ENCODE measurements at regions of chr1 and their contacts with region 1.

Region 1: DNA sequence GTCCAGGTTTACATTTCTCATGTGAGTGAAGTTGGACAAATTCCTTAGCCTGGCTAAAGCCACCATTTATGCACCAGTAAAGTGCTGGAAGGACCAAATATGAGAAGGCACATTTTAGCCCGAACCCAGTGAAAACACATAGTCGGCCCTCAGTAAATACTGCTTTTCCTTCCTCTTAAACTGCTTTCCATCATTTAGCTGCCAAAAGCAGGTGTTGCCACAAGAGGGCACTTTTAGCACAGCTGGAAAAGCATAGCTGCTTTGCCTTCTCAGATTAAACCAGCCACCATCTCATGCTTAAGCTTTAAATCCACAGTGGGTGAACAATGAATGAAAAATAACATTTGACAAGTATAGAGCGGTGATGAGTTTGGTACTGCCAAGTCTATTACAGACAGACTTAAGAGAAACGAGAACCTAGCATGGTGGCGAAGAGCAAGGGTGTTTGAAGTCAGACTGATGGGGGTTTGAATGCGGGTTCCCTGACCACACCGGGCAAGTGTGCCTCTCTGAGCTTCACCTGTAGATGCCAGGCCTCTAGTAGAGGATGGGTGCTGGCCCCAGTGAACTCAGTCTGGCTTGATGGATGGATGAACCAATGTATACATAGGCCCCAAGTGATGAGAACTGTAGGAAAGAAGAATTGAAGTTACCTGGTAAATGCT is 57.8 kb downstream of the SLC35D1 start:
- DNase-seq: peak; percentile 59
- ATAC-seq: peak; percentile 89
- H3K4me3 ChIP-seq: no peak overlapping the region
- H3K27ac ChIP-seq: no peak overlapping the region
- H3K4me1 ChIP-seq: no peaks in the 10 kb centered on the region
- H3K27me3 ChIP-seq: no peaks in the 10 kb centered on the region
- CTCF ChIP-seq: peak; percentile 76 to 85 (median 81)
- EP300 ChIP-seq: no peak
- POLR2A ChIP-seq: no peak
- RAD21 ChIP-seq: peak; percentile 94

Region 2: DNA sequence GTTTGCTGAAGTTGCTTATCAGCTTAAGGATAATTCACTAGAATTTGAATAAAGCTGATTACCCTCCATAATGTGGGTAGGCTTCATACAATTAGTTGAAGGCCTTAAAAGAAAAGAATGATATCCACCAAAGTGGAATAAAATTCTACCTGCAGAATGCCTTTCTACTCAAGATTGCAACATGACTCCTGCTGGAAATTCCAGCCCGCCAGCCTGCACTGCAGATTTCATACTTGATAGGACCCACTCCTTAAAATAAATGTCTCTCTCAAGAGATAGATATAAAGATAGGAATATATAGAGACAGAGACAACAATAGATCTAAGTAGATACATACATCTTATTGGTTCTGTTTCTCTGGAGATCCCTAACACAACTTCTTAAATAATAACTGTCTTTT is 171.4 kb before region 1 on chr1:
- CTCF ChIA-PET with region 1: no interaction called
- POLR2A ChIA-PET with region 1: no interaction called
- RAD21 ChIA-PET with region 1: no interaction called
- SMC1A ChIA-PET with region 1: no interaction called
- in situ Hi-C with region 1: no loop called
- intact Hi-C with region 1: no loop called
- DNase-seq: no peak
- ATAC-seq: no peak
- H3K4me3 ChIP-seq: no peak overlapping the region
- H3K27ac ChIP-seq: no peak overlapping the region
- H3K4me1 ChIP-seq: no peaks in the 10 kb centered on the region
- H3K27me3 ChIP-seq: no peaks in the 10 kb centered on the region
- CTCF ChIP-seq: no peak
- EP300 ChIP-seq: no peak
- POLR2A ChIP-seq: no peak
- RAD21 ChIP-seq: no peak

Region 3: DNA sequence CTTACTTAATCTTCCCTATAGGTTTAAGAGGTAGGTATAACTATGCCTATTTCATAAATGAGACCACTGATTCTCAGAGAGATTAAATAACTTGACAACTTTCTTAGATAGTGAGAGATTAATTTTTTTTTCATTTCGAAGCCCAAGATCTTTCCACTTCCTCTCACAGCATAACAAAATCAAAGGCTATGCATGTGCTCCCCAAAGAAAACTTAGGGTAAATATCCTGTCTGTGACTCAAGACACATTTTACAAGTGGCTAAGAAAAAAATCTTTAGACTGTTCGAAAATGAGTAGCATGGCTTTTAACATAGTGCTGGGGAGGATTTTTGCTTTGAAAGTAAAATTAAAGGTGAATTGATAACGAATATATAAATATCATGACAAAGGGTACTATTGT is 146.8 kb after region 1 on chr1:
- CTCF ChIA-PET with region 1: interaction called, 93 read pairs
- POLR2A ChIA-PET with region 1: interaction called, 5 read pairs
- RAD21 ChIA-PET with region 1: interaction called, 64 read pairs
- SMC1A ChIA-PET with region 1: interaction called, 66 read pairs
- in situ Hi-C with region 1: loop called (anchors 5 kb)
- intact Hi-C with region 1: no loop called
- DNase-seq: no peak
- ATAC-seq: no peak
- H3K4me3 ChIP-seq: no peak overlapping the region
- H3K27ac ChIP-seq: no peak overlapping the region
- H3K4me1 ChIP-seq: 0 out of 2 replicates have a peak, but pooled peaks cover 2% of the 10 kb centered on the region
- H3K27me3 ChIP-seq: no peaks in the 10 kb centered on the region
- CTCF ChIP-seq: no peak
- EP300 ChIP-seq: no peak
- POLR2A ChIP-seq: no peak
- RAD21 ChIP-seq: no peak

Region 4: GRCh38 chr1:67209521-67209920 is 213.4 kb after region 1 on chr1:
- CTCF ChIA-PET with region 1: interaction called, 114 read pairs
- POLR2A ChIA-PET with region 1: interaction called, 4 read pairs
- RAD21 ChIA-PET with region 1: interaction called, 58 read pairs
- SMC1A ChIA-PET with region 1: interaction called, 60 read pairs
- in situ Hi-C with region 1: loop called (anchors 5 kb)
- intact Hi-C with region 1: loop called (anchors 1 kb)
- DNase-seq: no peak
- ATAC-seq: no peak
- H3K4me3 ChIP-seq: no peak overlapping the region
- H3K27ac ChIP-seq: no peak overlapping the region
- H3K4me1 ChIP-seq: peaks cover 24% of the 10 kb centered on the region
- H3K27me3 ChIP-seq: no peaks in the 10 kb centered on the region
- CTCF ChIP-seq: no peak
- EP300 ChIP-seq: no peak
- POLR2A ChIP-seq: no peak
- RAD21 ChIP-seq: no peak